WTC11 (cell line): ENCODE measurements at regions of chr7 and their contacts with region 1.

Region 1: GRCh38 chr7:44348300-44348699 is 22.9 kb upstream of the CAMK2B start:
- DNase-seq: peak; percentile 66
- ATAC-seq: peak; percentile 94
- H3K4me3 Mint-ChIP-seq: no peak overlapping the region
- H3K27ac Mint-ChIP-seq: no peak overlapping the region
- H3K4me1 Mint-ChIP-seq: no peaks in the 10 kb centered on the region
- H3K27me3 Mint-ChIP-seq: peaks cover 7% of the 10 kb centered on the region
- CTCF ChIP-seq: peak; percentile 40

Region 2: DNA sequence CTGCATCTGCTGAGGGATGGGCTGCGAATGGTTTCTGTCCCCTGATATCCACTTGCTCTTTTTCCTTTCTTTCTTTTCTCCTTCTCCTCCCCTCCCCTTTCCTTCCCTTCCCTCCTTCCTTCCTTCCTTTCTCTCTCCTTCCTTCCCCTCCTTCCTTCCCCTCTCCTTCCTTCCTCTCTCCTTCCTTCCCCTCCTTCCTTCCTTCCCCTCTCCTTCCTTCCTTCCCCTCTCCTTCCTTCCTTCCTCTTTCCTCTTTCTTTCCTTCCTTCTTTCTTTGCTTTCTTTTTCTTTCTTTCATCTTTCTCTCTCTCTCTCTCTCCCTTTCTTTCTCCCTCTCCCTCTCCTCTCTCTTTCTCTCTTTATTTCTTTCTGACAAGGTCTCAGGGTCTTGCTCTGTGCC is 370.8 kb before region 1 on chr7:
- CTCF ChIA-PET with region 1: no interaction called
- POLR2A ChIA-PET with region 1: no interaction called
- DNase-seq: no peak
- ATAC-seq: no peak
- H3K4me3 Mint-ChIP-seq: no peak overlapping the region
- H3K27ac Mint-ChIP-seq: no peak overlapping the region
- H3K4me1 Mint-ChIP-seq: no peaks in the 10 kb centered on the region
- H3K27me3 Mint-ChIP-seq: no peaks in the 10 kb centered on the region
- CTCF ChIP-seq: no peak

Region 3: GRCh38 chr7:44240983-44241510 is 107.3 kb before region 1 on chr7:
- CTCF ChIA-PET with region 1: interaction called, 25 read pairs
- POLR2A ChIA-PET with region 1: no interaction called
- DNase-seq: peak; percentile 77
- ATAC-seq: peak; percentile 89
- H3K4me3 Mint-ChIP-seq: no peak overlapping the region
- H3K27ac Mint-ChIP-seq: no peak overlapping the region
- H3K4me1 Mint-ChIP-seq: no peaks in the 10 kb centered on the region
- H3K27me3 Mint-ChIP-seq: no peaks in the 10 kb centered on the region; the same call in 1 of the 2 replicates
- CTCF ChIP-seq: no peak; the same call in 1 of the 2 replicates

Region 4: DNA sequence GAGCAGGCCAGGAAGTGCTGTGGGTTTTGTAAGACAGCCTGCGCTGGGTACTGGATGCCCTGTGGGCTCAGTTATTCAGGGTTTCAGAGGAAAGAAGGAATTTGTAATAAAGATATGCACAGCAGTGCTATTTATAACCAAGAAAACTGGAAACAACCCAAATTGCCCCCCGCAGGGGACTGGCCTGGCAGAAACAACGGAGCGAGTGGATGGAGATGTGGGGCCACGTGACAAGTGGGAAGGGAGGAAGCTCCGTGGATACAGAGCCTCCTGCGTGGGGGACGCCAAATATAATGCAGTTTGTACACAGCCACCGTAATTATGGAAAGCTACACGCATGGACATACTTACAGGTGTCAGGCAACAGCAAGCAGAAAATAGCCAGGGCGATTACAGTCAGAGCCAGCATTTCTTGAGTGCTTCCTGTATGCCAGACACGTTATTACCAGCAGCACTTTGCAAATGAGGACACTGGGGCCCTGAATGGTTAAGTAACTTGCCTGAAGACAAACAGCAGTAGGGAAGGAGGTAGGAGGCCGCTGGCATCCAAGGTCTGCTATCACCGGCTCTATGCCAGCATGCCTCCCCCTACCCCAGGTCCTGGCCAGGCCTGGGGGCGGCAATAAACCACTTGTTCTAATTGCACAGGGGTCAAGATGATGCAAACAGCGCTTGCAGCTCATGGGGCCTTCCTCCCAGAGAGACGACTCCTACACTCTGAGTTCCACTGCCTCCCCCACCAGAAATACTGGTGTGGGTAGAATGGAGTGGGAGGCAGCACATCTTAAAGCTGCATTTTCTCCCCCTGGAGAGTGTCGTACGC is 14.2 kb before region 1 on chr7:
- CTCF ChIA-PET with region 1: interaction called, 38 read pairs
- POLR2A ChIA-PET with region 1: no interaction called
- DNase-seq: no peak
- ATAC-seq: peak; percentile 24
- H3K4me3 Mint-ChIP-seq: no peak overlapping the region
- H3K27ac Mint-ChIP-seq: no peak overlapping the region
- H3K4me1 Mint-ChIP-seq: peaks cover 15% of the 10 kb centered on the region
- H3K27me3 Mint-ChIP-seq: peaks cover 3% of the 10 kb centered on the region; the same call in 1 of the 2 replicates
- CTCF ChIP-seq: no peak

Region 5: GRCh38 chr7:44372560-44373417 is 24.5 kb after region 1 on chr7:
- CTCF ChIA-PET with region 1: interaction called, 50 read pairs
- POLR2A ChIA-PET with region 1: no interaction called
- DNase-seq: no peak
- ATAC-seq: no peak
- H3K4me3 Mint-ChIP-seq: no peak overlapping the region
- H3K27ac Mint-ChIP-seq: no peak overlapping the region
- H3K4me1 Mint-ChIP-seq: no peaks in the 10 kb centered on the region
- H3K27me3 Mint-ChIP-seq: peaks cover 13% of the 10 kb centered on the region
- CTCF ChIP-seq: no peak

Region 6: DNA sequence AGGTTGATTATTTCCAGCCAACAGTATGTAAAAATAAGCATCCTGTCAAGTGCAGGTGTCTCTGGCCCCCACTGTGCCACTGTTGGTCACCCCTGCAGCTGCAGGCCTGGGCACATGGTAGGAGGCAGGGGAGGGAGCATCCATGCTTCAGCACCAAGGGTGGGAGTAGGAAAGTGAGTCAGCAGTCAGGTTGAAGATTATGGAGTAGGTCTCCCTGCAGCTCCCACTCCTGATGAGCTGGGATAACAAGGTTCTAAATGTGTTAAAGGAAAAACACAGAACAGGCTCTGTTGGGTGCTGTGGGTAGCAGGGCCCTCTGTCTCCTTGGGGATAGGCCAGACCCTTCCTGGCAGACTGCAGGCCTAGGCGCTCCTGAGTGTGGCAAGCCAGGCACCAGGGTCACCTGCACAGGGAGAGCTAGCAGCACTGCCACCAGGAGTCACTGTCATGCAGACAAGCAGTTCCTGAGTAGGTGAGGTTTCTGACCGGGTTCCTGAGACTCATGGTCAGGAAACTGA is 82.8 kb after region 1 on chr7:
- CTCF ChIA-PET with region 1: interaction called, 11 read pairs
- POLR2A ChIA-PET with region 1: interaction called, 8 read pairs
- DNase-seq: peak; percentile 47
- ATAC-seq: peak; percentile 95
- H3K4me3 Mint-ChIP-seq: no peak overlapping the region
- H3K27ac Mint-ChIP-seq: no peak overlapping the region
- H3K4me1 Mint-ChIP-seq: peaks cover 11% of the 10 kb centered on the region
- H3K27me3 Mint-ChIP-seq: no peaks in the 10 kb centered on the region
- CTCF ChIP-seq: no peak

Region 7: DNA sequence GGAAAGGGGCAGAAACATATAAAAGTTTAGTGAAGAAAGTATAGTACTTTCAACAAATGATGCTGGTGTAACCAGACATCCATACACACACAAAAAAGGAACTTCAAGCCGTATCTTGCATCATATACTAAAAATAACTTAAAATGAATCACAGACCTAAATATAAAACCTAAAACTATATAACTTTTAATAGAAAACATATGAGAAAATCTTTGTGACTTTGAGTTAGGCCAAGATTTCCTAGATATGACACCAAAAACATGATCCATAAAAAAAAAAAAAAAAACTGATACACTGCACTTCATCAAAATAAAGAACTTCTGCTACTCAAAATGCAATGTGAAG is 101.3 kb after region 1 on chr7:
- CTCF ChIA-PET with region 1: no interaction called
- POLR2A ChIA-PET with region 1: no interaction called
- DNase-seq: no peak
- ATAC-seq: no peak
- H3K4me3 Mint-ChIP-seq: no peak overlapping the region
- H3K27ac Mint-ChIP-seq: no peak overlapping the region
- H3K4me1 Mint-ChIP-seq: peaks cover 17% of the 10 kb centered on the region
- H3K27me3 Mint-ChIP-seq: no peaks in the 10 kb centered on the region
- CTCF ChIP-seq: no peak

Region 8: DNA sequence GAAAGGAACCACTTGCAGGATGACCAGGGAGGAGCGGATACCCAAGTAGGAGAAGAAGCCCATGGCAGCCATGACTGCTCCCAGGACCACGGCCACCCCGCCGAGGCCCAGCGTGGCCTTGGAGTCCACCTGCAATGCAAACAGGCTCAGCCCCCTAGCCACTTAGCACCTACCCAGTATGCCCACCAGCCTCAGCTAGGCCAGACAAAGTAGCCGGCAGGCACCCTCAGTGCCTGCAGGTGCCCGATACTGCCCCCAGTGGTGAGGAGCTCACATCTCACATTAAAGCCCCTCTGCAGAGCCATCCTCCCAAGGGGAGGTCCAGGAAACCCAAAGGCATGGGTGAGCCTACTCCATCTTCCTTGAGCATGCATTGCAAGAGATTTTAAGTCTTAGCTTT is 186.2 kb after region 1 on chr7:
- CTCF ChIA-PET with region 1: interaction called, 16 read pairs
- POLR2A ChIA-PET with region 1: no interaction called
- DNase-seq: peak; percentile 79
- ATAC-seq: peak; percentile 99
- H3K4me3 Mint-ChIP-seq: no peak overlapping the region
- H3K27ac Mint-ChIP-seq: no peak overlapping the region
- H3K4me1 Mint-ChIP-seq: no peaks in the 10 kb centered on the region
- H3K27me3 Mint-ChIP-seq: no peaks in the 10 kb centered on the region; the same call in 1 of the 2 replicates
- CTCF ChIP-seq: peak; percentile 75